ENCODE measurements at regions of chr10 and their contacts with region 1.

Region 1: GRCh38 chr10:103416436-103417147 is 20.2 kb downstream of the PDCD11 start:
- DNase-seq: peak; percentile 79
- H3K4me3 ChIP-seq: no peak overlapping the region
- H3K27ac ChIP-seq: no peak overlapping the region
- H3K4me1 ChIP-seq: no peaks in the 10 kb centered on the region
- CTCF ChIP-seq: peak; percentile 90

Region 2: DNA sequence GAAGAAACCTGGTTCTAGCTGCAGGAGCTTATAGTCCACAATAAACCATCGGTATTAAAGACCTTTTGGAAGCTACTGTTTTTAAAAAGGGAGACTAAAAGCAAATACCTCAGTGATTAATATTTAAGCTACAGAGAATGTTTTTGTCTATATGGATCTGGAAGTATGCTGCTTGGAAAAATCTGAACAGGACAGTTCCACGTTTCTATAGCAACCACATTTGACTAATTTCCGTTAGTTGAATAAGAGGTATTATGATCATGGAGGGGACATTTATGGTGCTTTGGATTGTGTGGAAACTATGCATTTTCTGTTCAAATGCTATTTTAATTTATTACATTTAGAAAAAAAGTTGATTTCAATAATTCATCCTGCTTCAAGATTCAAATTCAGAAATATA is 28.4 kb before region 1 on chr10:
- CTCF ChIA-PET with region 1: no interaction called
- POLR2A ChIA-PET with region 1: no interaction called
- intact Hi-C with region 1: no loop called
- DNase-seq: no peak
- H3K4me3 ChIP-seq: no peak overlapping the region
- H3K27ac ChIP-seq: no peak overlapping the region
- H3K4me1 ChIP-seq: no peaks in the 10 kb centered on the region
- CTCF ChIP-seq: no peak

Region 3: GRCh38 chr10:103481974-103482531 is 65.5 kb after region 1 on chr10:
- CTCF ChIA-PET with region 1: interaction called, 6 read pairs
- POLR2A ChIA-PET with region 1: interaction called, 4 read pairs
- intact Hi-C with region 1: loop called (anchors 1 kb)
- DNase-seq: peak; percentile 86
- H3K4me3 ChIP-seq: no peak overlapping the region
- H3K27ac ChIP-seq: no peak overlapping the region
- H3K4me1 ChIP-seq: peaks cover 10% of the 10 kb centered on the region
- CTCF ChIP-seq: peak; percentile 94

Measured in OCI-LY7 (cell line).